ENCODE measurements at regions of chr9 and their contacts with region 1.

Region 1: DNA sequence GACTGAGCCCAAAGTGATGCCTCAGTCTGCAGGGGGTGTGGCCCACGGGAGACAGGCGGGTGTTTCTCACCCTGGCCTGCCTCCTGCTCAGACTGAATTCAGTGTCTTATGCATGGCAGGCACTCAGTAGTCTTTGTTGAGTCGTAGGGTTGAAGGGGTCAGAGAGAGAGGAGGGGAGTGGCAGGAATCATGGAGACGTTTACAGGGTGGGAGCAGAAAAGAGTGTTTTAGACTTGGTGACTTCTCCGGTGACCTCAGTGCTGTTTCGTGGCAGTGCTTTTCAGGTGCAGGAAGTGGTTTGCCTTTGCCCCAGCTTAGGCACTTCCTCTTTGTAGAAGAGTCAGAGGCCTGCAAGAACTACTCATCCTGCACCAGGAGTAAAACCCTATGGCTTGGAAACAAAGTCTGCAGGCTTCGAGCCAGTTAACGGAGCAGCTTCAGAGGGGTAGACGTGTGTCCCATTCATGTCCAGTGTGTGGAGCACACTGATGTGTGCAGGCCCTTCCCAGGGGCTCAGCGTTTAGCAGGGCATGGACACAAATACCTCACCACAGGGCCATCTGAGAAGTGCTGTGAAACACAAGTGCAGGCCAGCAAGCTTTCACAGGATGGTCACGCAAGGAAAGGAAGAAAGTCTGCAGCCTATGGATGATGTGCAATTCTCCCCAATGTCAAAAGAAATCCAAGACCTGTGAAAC is 24.5 kb upstream of the SEMA4D start:
- DNase-seq: peak; percentile 84 to 95 (median 86)
- H3K4me3 ChIP-seq: peak overlapping the region; percentile 19 to 30
- H3K4me3 Mint-ChIP-seq: peak overlapping the region; percentile 68 to 90 (median 78)
- H3K27ac ChIP-seq: peak overlapping the region; percentile 60
- H3K27ac Mint-ChIP-seq: peak overlapping the region; percentile 91 to 100 (median 98)
- H3K4me1 ChIP-seq: peaks cover 99% of the 10 kb centered on the region
- H3K4me1 Mint-ChIP-seq: peaks cover 73 to 98% (median 90%) of the 10 kb centered on the region in 4 donors
- H3K27me3 ChIP-seq: no peaks in the 10 kb centered on the region
- H3K27me3 Mint-ChIP-seq: no peaks in the 10 kb centered on the region

Region 2: GRCh38 chr9:89418882-89419640 is 103.3 kb before region 1 on chr9:
- CTCF ChIA-PET with region 1: interaction called, 3 read pairs
- POLR2A ChIA-PET with region 1: interaction called, 10 read pairs
- intact Hi-C with region 1: no loop called
- DNase-seq: peak; percentile 69 to 86 (median 75)
- H3K4me3 ChIP-seq: peak overlapping the region in 1 of 2 donors; percentile 48
- H3K4me3 Mint-ChIP-seq: peak overlapping the region; percentile 81 to 94 (median 84)
- H3K27ac ChIP-seq: peak overlapping the region; percentile 73
- H3K27ac Mint-ChIP-seq: peak overlapping the region; percentile 83 to 97 (median 97)
- H3K4me1 ChIP-seq: peaks cover 100% of the 10 kb centered on the region
- H3K4me1 Mint-ChIP-seq: peaks cover 69 to 99% (median 80%) of the 10 kb centered on the region in 4 donors
- H3K27me3 ChIP-seq: no peaks in the 10 kb centered on the region
- H3K27me3 Mint-ChIP-seq: no peaks in the 10 kb centered on the region

Region 3: GRCh38 chr9:89455356-89455824 is 67.0 kb before region 1 on chr9:
- CTCF ChIA-PET with region 1: interaction called, 10 read pairs
- POLR2A ChIA-PET with region 1: interaction called, 11 read pairs
- intact Hi-C with region 1: no loop called
- DNase-seq: peak; percentile 50 to 72 (median 63)
- H3K4me3 ChIP-seq: peak overlapping the region in 1 of 2 donors; percentile 22
- H3K4me3 Mint-ChIP-seq: peak overlapping the region; percentile 72 to 90 (median 82)
- H3K27ac ChIP-seq: peak overlapping the region; percentile 68
- H3K27ac Mint-ChIP-seq: peak overlapping the region; percentile 92 to 98 (median 97)
- H3K4me1 ChIP-seq: peaks cover 97% of the 10 kb centered on the region
- H3K4me1 Mint-ChIP-seq: peaks cover 71 to 98% (median 87%) of the 10 kb centered on the region in 4 donors
- H3K27me3 ChIP-seq: no peaks in the 10 kb centered on the region
- H3K27me3 Mint-ChIP-seq: no peaks in the 10 kb centered on the region

Region 4: GRCh38 chr9:89477811-89478630 is 44.4 kb before region 1 on chr9:
- CTCF ChIA-PET with region 1: interaction called, 3 read pairs
- POLR2A ChIA-PET with region 1: interaction called, 38 read pairs
- intact Hi-C with region 1: loop called (anchors 2 kb)
- DNase-seq: peak; percentile 50 to 80 (median 53)
- H3K4me3 ChIP-seq: peak overlapping the region; percentile 52 to 57
- H3K4me3 Mint-ChIP-seq: peak overlapping the region; percentile 77 to 91 (median 86)
- H3K27ac ChIP-seq: peak overlapping the region; percentile 75
- H3K27ac Mint-ChIP-seq: peak overlapping the region; percentile 85 to 97 (median 96)
- H3K4me1 ChIP-seq: peaks cover 88% of the 10 kb centered on the region
- H3K4me1 Mint-ChIP-seq: peaks cover 72 to 94% (median 85%) of the 10 kb centered on the region in 4 donors
- H3K27me3 ChIP-seq: no peaks in the 10 kb centered on the region
- H3K27me3 Mint-ChIP-seq: no peaks in the 10 kb centered on the region

Region 5: DNA sequence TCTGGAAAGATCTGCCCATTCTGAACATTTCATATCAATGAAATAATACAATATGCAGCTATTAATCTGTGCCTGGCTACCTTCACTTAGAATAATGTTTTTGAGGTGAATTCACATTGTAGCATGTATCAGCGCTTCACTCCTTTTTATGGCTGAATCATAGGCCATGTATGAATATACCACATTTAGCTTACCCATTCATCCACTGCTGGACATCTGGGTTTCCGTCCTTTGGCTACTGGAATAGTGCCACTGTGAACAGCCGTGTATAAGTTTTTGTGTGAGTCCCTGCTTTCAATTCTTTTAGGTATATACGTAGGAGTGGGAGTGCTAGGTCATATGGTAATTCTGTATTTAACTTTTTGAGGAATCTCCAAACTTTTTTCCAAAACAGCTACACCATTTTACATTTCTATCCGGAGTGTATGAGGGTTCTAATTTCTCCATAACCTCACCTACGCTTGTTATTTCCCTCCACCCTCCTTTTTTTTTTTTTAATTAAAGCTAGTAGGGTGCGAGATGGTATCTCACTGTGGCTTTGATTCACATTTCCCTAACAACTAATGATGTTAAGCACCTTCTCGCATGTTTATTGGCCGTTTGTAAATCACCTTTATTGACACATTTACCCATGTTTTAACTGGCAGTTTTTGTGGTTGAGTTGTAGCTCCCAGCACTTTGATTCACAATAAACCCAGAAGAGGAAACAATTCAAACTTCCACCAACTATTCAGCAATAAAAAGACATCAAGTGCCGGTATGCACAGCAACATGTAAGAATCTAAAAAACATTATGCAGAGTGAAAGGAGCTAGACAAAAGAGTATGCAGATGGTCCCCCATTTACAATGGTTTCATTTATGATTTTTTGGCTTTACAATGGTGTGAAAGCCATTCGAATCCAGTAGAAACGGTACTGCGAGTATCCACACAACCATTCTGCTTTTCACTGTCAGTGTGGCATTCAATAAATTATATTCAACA is 32.6 kb before region 1 on chr9:
- CTCF ChIA-PET with region 1: no interaction called
- POLR2A ChIA-PET with region 1: interaction called, 38 read pairs
- intact Hi-C with region 1: loop called (anchors 1 kb)
- DNase-seq: peak; percentile 71 to 86 (median 83)
- H3K4me3 ChIP-seq: peak overlapping the region; percentile 19 to 20
- H3K4me3 Mint-ChIP-seq: peak overlapping the region; percentile 68 to 100 (median 92)
- H3K27ac ChIP-seq: peak overlapping the region; percentile 72
- H3K27ac Mint-ChIP-seq: peak overlapping the region; percentile 74 to 99 (median 88)
- H3K4me1 ChIP-seq: peaks cover 97% of the 10 kb centered on the region
- H3K4me1 Mint-ChIP-seq: peaks cover 87 to 100% (median 93%) of the 10 kb centered on the region in 4 donors
- H3K27me3 ChIP-seq: no peaks in the 10 kb centered on the region
- H3K27me3 Mint-ChIP-seq: no peaks in the 10 kb centered on the region

Region 6: DNA sequence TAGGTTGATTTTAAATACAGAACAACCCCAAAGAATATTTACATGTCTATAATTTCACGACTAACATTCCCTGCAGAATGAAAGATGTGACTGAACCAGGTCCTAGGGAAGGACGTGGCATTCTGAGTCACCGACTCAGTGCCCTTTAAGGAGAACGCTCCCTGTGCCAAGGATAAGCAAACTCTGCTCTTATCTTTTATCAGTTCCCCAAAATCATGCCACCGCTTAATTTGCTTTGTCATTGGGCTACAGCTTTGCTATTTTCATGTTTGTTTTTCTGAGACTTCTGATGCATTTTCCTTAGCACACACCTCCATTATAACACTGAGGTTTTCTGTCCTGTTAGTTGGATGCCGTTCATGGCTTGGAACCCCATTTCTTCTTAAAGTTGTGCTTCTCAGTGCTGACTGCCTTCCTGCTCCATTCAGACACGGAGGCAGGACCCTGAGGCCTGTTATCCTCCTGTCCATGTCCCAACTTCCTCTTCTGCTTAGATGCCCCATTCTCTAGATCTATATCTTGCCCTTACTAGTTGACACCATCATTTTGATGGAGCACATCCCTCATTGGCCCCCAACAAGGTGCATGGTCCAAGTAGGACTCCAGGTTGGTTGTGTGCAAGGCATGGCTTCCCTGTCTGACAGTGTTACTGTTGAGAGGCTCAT is 13.3 kb before region 1 on chr9:
- CTCF ChIA-PET with region 1: interaction called, 9 read pairs
- POLR2A ChIA-PET with region 1: interaction called, 59 read pairs
- intact Hi-C with region 1: no loop called
- DNase-seq: no peak
- H3K4me3 ChIP-seq: no peak overlapping the region
- H3K4me3 Mint-ChIP-seq: peak overlapping the region in 2 of 8 donors; percentile 15 to 41
- H3K27ac ChIP-seq: no peak overlapping the region
- H3K27ac Mint-ChIP-seq: peak overlapping the region in 4 of 7 donors; percentile 11 to 72 (median 25)
- H3K4me1 ChIP-seq: peaks cover 47% of the 10 kb centered on the region
- H3K4me1 Mint-ChIP-seq: peaks cover 45 to 88% (median 66%) of the 10 kb centered on the region in 4 donors
- H3K27me3 ChIP-seq: no peaks in the 10 kb centered on the region
- H3K27me3 Mint-ChIP-seq: no peaks in the 10 kb centered on the region

Measured in CD4-positive, alpha-beta memory T cell (primary cell).